Caco-2 (cell line): ENCODE measurements at regions of chr14 and their contacts with region 1.

Region 1: DNA sequence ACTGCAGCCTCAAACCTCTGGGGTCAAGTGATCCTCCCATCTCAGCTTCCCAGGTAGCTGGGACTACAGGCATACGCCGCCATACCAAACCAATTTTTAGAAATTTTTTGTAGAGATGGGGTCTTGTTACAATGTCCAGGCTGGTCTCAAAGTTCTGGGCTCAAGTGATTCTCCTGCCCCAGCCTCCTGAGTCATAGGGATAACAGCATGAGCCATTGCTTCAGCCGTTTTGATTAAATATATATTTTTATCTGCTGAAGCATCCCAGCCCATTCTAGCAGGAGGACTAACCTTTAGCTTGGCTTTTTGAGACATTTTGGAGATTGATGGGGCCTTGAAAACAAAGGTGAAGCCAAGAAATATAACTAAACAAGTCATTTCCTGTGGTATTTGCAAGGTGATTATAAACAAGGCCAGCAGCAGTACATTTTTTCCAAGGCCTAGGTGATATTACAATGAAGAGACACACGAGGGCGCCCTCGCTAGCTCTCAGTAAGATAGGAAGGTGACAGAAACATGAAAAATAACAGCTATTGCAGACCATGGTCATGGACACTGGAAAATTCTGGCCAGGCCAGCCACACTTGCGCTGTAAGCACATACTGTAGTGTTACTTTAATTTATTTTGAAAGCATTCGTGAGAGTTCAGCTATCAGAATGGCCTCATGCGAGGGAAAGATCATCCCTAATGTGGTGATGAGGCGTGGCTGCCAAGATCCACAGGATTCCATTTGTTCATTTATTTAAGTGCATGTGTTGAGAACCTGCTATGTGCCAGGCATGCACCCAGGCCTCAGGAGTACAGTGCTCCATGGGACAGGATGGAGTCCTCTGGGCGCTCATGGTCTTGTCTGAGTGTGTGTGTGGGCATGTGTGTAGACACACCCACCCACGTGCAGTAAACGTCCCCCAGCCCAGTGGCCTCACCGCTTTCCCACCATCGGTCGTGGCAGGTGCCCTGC is 63.5 kb downstream of the DGLUCY start:
- DNase-seq: peak; percentile 44 to 49
- H3K4me3 ChIP-seq: no peak overlapping the region
- H3K4me3 Mint-ChIP-seq: no peak overlapping the region
- H3K27ac Mint-ChIP-seq: no peak overlapping the region
- H3K4me1 ChIP-seq: no peaks in the 10 kb centered on the region
- H3K4me1 Mint-ChIP-seq: peaks cover 5% of the 10 kb centered on the region
- H3K27me3 ChIP-seq: no peaks in the 10 kb centered on the region
- H3K27me3 Mint-ChIP-seq: no peaks in the 10 kb centered on the region
- CTCF ChIP-seq: peak; percentile 68 to 71

Region 2: GRCh38 chr14:90903101-90903500 is 274.3 kb before region 1 on chr14:
- CTCF ChIA-PET with region 1: interaction called, 39 read pairs
- POLR2A ChIA-PET with region 1: no interaction called
- intact Hi-C with region 1: loop called (anchors 1 kb)
- DNase-seq: peak; percentile 55 to 64
- H3K4me3 ChIP-seq: no peak overlapping the region
- H3K4me3 Mint-ChIP-seq: no peak overlapping the region
- H3K27ac Mint-ChIP-seq: no peak overlapping the region
- H3K4me1 ChIP-seq: no peaks in the 10 kb centered on the region
- H3K4me1 Mint-ChIP-seq: no peaks in the 10 kb centered on the region
- H3K27me3 ChIP-seq: no peaks in the 10 kb centered on the region
- H3K27me3 Mint-ChIP-seq: no peaks in the 10 kb centered on the region
- CTCF ChIP-seq: peak; percentile 62 to 74

Region 3: DNA sequence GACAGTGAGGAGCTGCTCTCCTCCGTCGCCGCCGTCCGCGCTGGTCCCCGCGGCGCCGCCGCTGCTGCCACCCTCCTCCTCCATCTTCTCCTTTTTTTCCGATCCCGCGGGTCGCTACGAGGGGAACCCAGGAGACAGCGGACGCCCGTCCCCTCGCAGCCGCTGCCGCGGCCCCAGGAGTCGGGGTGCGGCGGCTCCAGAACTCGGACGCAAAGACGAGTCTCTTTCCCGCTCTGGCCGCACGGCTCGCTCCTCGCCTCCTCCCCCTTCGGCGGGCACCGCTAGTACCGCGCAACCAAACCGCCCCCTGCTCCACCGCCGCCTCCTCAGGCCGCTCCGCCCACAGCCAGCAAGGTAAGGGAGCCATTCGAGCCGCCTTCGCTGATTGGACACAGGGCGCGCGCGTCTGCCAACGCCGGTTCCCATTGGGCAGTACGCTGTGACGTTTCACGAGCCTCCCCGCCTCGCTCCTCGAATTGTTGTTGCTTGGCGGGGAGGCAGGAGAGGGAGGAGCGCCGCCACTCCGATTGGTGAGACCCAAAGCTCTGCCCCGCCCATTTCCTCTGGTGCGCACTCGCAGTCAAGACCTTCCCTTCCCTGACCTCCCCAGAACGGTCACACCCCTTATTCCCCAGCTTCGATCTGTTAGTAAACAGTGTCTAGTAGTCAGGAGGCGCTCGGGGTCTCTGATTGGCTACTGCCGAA is 116.9 kb before region 1 on chr14 and contains the start of gene RPS6KA5:
- CTCF ChIA-PET with region 1: interaction called, 10 read pairs
- POLR2A ChIA-PET with region 1: interaction called, 4 read pairs
- intact Hi-C with region 1: loop called (anchors 1 kb)
- DNase-seq: peak; percentile 99 to 100
- H3K4me3 ChIP-seq: peak within 1 kb of the TSS; percentile 90
- H3K4me3 Mint-ChIP-seq: no peak within 1 kb of the TSS
- H3K27ac Mint-ChIP-seq: no peak within 1 kb of the TSS
- H3K4me1 ChIP-seq: no peaks in the 10 kb centered on the region
- H3K4me1 Mint-ChIP-seq: no peaks in the 10 kb centered on the region
- H3K27me3 ChIP-seq: no peaks in the 10 kb centered on the region
- H3K27me3 Mint-ChIP-seq: no peaks in the 10 kb centered on the region
- CTCF ChIP-seq: no peak
- total RNA-seq, gene RPS6KA5: 5.7 and 6.0 TPM in 2 replicates

Region 4: DNA sequence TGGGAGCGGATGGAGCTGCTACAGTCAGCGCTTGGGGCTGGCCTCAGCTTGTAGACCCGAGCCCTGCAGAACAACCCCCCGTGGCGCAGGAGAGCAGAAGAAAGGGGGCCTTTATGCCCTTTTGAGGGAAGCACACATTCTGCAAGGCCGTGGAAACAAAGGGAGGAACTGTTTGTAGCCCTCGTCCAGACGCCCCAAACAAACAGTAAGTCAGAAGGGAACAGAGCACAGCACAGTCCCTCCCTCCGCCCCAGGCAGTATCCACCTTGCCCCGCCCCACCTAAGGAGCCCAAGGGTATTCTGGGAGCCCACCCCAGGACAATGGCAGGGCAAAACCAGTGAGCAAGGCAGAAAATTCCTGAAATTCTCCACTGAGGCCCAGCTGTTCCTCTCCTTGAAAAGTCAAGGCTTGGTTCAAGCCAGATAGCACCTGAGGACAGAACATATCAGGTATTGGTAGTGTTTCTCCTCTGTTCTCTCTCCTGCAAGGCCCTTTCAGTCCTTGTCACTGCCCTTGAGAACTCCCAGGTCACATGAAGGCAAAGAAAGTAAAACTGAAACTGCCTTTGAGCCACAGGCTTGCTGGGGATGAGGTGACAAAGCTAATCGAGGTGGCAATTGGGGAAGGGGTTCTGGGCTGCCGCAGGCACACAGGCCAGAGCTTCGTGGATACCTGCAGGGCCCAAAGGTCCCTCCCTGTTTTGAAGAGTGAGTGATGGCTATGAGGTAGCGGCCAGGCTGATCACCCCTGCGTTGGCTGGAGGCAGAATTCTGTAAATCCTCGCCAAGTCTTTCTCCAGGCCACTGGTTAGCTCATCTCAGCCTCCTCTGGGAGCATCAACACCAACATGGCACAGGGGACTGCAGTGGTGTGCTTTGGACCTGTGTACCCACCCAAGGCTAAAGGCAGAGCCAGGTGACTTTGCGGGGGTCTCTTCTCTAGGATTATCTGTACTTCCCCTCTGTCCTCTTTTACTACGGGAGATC is 63.0 kb before region 1 on chr14:
- CTCF ChIA-PET with region 1: interaction called, 11 read pairs
- POLR2A ChIA-PET with region 1: no interaction called
- intact Hi-C with region 1: no loop called
- DNase-seq: peak; percentile 87 to 89
- H3K4me3 ChIP-seq: peak overlapping the region; percentile 64
- H3K4me3 Mint-ChIP-seq: peak overlapping the region; percentile 84
- H3K27ac Mint-ChIP-seq: peak overlapping the region; percentile 84
- H3K4me1 ChIP-seq: peaks cover 9% of the 10 kb centered on the region
- H3K4me1 Mint-ChIP-seq: peaks cover 5% of the 10 kb centered on the region
- H3K27me3 ChIP-seq: no peaks in the 10 kb centered on the region
- H3K27me3 Mint-ChIP-seq: no peaks in the 10 kb centered on the region
- CTCF ChIP-seq: no peak

Region 5: DNA sequence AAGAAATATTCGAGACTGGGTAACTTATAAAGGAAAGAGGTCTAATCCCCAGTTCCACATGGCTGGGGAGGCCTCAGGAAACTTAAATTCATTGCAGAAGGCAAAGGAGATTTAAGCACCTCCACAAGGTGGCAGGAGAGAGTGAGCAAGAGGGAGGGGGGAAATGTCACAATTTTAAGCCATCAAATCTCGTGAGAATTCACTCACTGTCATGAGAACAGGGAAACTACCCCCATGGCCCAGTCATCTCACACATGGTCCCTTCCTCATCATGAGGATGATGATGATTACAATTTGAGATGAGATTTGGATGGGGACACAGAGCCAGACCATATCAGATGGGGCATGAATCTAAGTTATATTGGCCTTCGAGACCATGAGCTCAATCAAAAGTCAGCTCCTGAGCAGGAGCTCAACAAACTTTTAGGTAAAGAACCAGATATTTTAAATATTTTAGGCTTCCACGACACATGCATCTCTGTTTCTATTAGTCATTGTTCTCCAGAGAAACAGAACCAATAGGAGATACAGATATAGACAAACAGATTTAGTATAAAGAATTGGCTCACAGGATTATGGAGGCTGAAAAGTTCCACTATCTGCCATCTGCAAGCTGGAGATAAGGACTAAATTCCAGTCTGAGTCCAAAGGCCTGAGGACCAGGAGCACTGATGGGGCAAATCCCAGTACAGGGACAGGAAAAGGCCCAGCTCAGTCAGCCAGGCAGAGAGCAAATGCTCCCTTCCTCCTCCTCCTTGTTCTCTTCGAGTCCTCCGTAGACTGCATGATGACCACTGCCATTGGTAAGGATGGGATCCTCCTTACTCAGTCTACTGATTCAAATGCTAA is 38.6 kb before region 1 on chr14:
- CTCF ChIA-PET with region 1: interaction called, 22 read pairs
- POLR2A ChIA-PET with region 1: no interaction called
- intact Hi-C with region 1: loop called (anchors 1 kb)
- DNase-seq: peak; percentile 61 to 68
- H3K4me3 ChIP-seq: no peak overlapping the region
- H3K4me3 Mint-ChIP-seq: no peak overlapping the region
- H3K27ac Mint-ChIP-seq: peak overlapping the region; percentile 6
- H3K4me1 ChIP-seq: peaks cover 36% of the 10 kb centered on the region
- H3K4me1 Mint-ChIP-seq: peaks cover 7% of the 10 kb centered on the region
- H3K27me3 ChIP-seq: no peaks in the 10 kb centered on the region
- H3K27me3 Mint-ChIP-seq: no peaks in the 10 kb centered on the region
- CTCF ChIP-seq: peak; percentile 37 to 58

Region 6: DNA sequence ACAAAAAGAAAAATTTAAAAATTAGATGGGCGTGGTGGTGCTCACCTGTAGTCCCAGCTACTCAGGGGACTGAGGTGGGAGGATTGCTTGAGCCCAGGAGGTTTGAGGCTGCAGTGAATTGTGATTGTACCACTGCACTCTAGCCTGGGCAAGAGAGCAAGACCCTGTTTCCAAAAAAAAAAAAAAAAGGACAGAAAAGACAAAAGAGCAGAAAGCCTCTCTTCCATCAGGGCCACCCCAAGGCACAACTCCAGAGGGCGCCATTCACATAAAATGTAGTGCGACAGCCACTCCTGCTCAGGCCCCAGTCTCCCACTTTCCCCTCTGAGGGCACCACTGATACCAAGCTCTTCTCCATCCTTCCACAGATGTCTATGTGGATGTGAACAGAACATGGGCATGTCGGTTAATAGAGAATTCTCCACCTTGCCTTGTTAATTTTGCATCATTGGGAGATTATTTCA is 21.7 kb before region 1 on chr14:
- CTCF ChIA-PET with region 1: interaction called, 14 read pairs
- POLR2A ChIA-PET with region 1: no interaction called
- intact Hi-C with region 1: no loop called
- DNase-seq: no peak
- H3K4me3 ChIP-seq: no peak overlapping the region
- H3K4me3 Mint-ChIP-seq: no peak overlapping the region
- H3K27ac Mint-ChIP-seq: peak overlapping the region; percentile 94
- H3K4me1 ChIP-seq: peaks cover 61% of the 10 kb centered on the region
- H3K4me1 Mint-ChIP-seq: peaks cover 44% of the 10 kb centered on the region
- H3K27me3 ChIP-seq: no peaks in the 10 kb centered on the region
- H3K27me3 Mint-ChIP-seq: no peaks in the 10 kb centered on the region
- CTCF ChIP-seq: no peak

Region 7: DNA sequence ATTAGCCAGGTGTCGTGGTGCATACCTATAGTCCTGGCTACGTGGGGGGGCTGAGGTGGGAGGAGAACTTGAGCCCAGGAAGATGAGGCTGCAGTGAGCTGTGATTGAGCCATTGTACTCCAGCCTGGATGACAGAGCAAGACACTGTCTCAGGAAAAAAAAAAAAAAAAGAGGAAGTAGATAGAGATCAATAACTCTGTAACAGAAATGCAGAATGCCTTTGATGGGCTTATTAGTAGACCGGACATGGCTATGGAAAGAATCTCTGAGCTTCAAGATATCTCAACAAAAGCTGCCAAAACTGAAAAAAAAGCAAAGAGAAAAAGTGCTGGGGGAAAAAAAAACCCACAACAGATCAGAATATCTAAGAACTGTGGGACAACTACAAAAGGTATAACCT is 29.7 kb after region 1 on chr14:
- CTCF ChIA-PET with region 1: no interaction called
- POLR2A ChIA-PET with region 1: no interaction called
- intact Hi-C with region 1: no loop called
- DNase-seq: no peak
- H3K4me3 ChIP-seq: no peak overlapping the region
- H3K4me3 Mint-ChIP-seq: no peak overlapping the region
- H3K27ac Mint-ChIP-seq: no peak overlapping the region
- H3K4me1 ChIP-seq: no peaks in the 10 kb centered on the region
- H3K4me1 Mint-ChIP-seq: no peaks in the 10 kb centered on the region
- H3K27me3 ChIP-seq: no peaks in the 10 kb centered on the region
- H3K27me3 Mint-ChIP-seq: no peaks in the 10 kb centered on the region
- CTCF ChIP-seq: no peak

Region 8: GRCh38 chr14:91286530-91286937 is 109.2 kb after region 1 on chr14:
- CTCF ChIA-PET with region 1: interaction called, 11 read pairs
- POLR2A ChIA-PET with region 1: no interaction called
- intact Hi-C with region 1: loop called (anchors 1 kb)
- DNase-seq: peak; percentile 55 to 74
- H3K4me3 ChIP-seq: no peak overlapping the region
- H3K4me3 Mint-ChIP-seq: no peak overlapping the region
- H3K27ac Mint-ChIP-seq: no peak overlapping the region
- H3K4me1 ChIP-seq: no peaks in the 10 kb centered on the region
- H3K4me1 Mint-ChIP-seq: no peaks in the 10 kb centered on the region
- H3K27me3 ChIP-seq: no peaks in the 10 kb centered on the region
- H3K27me3 Mint-ChIP-seq: no peaks in the 10 kb centered on the region
- CTCF ChIP-seq: peak; percentile 76 to 79

Region 9: DNA sequence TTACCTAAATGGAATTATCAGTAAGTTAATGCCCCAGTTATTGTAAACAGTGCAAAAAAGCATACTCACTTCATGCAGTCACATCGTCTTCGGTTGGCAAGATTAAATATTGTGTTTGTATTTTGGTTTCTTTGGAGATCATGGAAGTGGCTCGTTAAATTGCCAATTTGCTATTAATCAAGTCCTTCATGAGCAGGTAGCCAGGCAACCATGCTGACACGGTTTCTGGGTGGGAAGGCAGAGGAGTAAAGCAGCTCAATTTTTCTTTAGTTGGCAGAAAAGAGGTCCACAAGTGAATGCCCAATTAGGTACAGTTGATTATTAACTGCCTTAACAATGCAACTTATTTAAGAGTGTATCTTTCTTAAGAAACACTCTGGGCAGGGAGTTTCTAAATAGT is 288.8 kb after region 1 on chr14:
- CTCF ChIA-PET with region 1: no interaction called
- POLR2A ChIA-PET with region 1: no interaction called
- intact Hi-C with region 1: no loop called
- DNase-seq: no peak
- H3K4me3 ChIP-seq: no peak overlapping the region
- H3K4me3 Mint-ChIP-seq: no peak overlapping the region
- H3K27ac Mint-ChIP-seq: no peak overlapping the region
- H3K4me1 ChIP-seq: peaks cover 4% of the 10 kb centered on the region; the same call in 1 of the 2 replicates
- H3K4me1 Mint-ChIP-seq: peaks cover 9% of the 10 kb centered on the region
- H3K27me3 ChIP-seq: no peaks in the 10 kb centered on the region
- H3K27me3 Mint-ChIP-seq: no peaks in the 10 kb centered on the region
- CTCF ChIP-seq: no peak